Activated B cell treated with CpG ODN at 0.5 μM for 24 hours (primary cell): ENCODE measurements at regions of chr6 and their contacts with region 1.

Region 1: DNA sequence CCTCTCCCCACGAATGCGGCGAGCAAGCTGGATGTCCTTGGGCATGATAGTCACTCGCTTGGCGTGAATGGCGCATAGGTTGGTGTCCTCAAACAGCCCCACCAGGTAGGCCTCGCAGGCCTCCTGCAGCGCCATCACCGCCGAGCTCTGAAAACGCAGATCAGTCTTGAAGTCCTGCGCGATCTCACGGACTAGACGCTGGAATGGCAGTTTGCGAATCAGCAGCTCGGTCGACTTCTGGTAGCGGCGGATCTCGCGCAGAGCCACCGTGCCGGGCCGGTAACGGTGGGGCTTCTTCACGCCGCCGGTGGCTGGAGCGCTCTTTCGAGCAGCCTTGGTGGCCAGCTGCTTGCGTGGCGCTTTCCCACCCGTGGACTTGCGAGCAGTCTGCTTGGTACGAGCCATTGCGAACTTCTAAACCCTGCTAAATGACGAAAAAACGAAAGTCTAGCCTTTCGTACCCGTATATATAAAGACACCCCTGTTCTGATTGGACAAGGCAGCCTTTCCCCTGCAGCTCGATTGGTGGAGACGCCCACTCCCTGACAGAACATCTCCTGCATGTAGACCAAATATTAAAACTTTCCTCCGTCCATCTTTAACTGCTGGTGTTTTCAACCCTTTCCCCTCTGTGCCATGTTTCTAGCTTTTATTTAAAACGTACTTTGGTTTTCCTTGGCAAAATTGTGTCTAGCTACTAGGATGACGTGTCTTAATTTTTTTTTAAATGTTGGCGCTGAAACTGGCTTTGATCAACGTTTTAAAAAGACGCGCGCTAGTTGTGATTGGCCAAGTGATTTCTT is 109.8 kb downstream of the HFE start:
- DNase-seq: peak; percentile 63
- ATAC-seq: peak; percentile 53
- H3K4me3 Mint-ChIP-seq: peak overlapping the region; percentile 93
- H3K27ac Mint-ChIP-seq: peak overlapping the region; percentile 96
- H3K4me1 Mint-ChIP-seq: peaks cover 52% of the 10 kb centered on the region
- H3K27me3 Mint-ChIP-seq: no peaks in the 10 kb centered on the region
- CTCF ChIP-seq: no peak

Region 2: DNA sequence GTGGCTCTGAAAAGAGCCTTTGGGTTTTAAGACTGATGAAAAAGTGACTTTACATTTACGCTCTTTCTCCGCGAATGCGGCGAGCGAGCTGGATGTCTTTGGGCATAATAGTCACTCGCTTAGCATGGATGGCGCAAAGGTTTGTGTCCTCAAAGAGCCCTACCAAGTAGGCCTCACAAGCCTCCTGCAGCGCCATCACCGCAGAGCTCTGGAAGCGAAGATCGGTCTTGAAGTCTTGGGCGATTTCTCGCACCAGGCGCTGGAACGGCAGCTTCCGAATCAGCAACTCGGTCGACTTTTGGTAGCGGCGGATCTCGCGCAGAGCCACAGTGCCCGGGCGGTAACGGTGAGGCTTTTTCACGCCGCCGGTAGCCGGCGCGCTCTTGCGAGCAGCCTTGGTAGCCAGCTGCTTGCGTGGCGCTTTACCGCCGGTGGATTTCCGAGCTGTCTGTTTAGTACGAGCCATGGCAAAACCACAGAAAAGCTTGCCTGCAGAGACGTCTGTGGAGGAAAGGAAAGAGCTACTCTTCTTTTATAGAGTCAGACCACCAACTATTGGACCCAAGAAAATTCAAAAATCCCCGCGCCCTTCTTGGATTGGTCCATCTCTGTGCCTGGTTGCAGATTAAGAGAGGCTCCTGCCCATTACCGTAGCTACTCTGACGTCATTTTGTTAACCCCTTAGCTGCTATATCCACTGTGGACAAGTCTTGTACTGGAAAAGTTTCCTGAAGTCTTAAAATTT is 165.3 kb before region 1 on chr6:
- CTCF ChIA-PET with region 1: no interaction called
- POLR2A ChIA-PET with region 1: interaction called, 71 read pairs
- intact Hi-C with region 1: loop called (anchors 1 kb)
- DNase-seq: peak; percentile 55
- ATAC-seq: peak; percentile 62
- H3K4me3 Mint-ChIP-seq: peak overlapping the region; percentile 93
- H3K27ac Mint-ChIP-seq: peak overlapping the region; percentile 98
- H3K4me1 Mint-ChIP-seq: peaks cover 40% of the 10 kb centered on the region
- H3K27me3 Mint-ChIP-seq: peaks cover 2% of the 10 kb centered on the region
- CTCF ChIP-seq: no peak

Region 3: GRCh38 chr6:26103770-26104456 is 93.1 kb before region 1 on chr6:
- CTCF ChIA-PET with region 1: no interaction called
- POLR2A ChIA-PET with region 1: interaction called, 40 read pairs
- intact Hi-C with region 1: loop called (anchors 1 kb)
- DNase-seq: peak; percentile 83
- ATAC-seq: peak; percentile 85
- H3K4me3 Mint-ChIP-seq: peak overlapping the region; percentile 85
- H3K27ac Mint-ChIP-seq: peak overlapping the region; percentile 98
- H3K4me1 Mint-ChIP-seq: peaks cover 12% of the 10 kb centered on the region
- H3K27me3 Mint-ChIP-seq: peaks cover 3% of the 10 kb centered on the region
- CTCF ChIP-seq: no peak

Region 4: GRCh38 chr6:26234421-26235296 is 37.6 kb after region 1 on chr6:
- CTCF ChIA-PET with region 1: interaction called, 5 read pairs
- POLR2A ChIA-PET with region 1: interaction called, 340 read pairs
- intact Hi-C with region 1: loop called (anchors 1 kb)
- DNase-seq: peak; percentile 49
- ATAC-seq: peak; percentile 77
- H3K4me3 Mint-ChIP-seq: peak overlapping the region; percentile 89
- H3K27ac Mint-ChIP-seq: peak overlapping the region; percentile 97
- H3K4me1 Mint-ChIP-seq: peaks cover 26% of the 10 kb centered on the region
- H3K27me3 Mint-ChIP-seq: no peaks in the 10 kb centered on the region
- CTCF ChIP-seq: no peak

Region 5: DNA sequence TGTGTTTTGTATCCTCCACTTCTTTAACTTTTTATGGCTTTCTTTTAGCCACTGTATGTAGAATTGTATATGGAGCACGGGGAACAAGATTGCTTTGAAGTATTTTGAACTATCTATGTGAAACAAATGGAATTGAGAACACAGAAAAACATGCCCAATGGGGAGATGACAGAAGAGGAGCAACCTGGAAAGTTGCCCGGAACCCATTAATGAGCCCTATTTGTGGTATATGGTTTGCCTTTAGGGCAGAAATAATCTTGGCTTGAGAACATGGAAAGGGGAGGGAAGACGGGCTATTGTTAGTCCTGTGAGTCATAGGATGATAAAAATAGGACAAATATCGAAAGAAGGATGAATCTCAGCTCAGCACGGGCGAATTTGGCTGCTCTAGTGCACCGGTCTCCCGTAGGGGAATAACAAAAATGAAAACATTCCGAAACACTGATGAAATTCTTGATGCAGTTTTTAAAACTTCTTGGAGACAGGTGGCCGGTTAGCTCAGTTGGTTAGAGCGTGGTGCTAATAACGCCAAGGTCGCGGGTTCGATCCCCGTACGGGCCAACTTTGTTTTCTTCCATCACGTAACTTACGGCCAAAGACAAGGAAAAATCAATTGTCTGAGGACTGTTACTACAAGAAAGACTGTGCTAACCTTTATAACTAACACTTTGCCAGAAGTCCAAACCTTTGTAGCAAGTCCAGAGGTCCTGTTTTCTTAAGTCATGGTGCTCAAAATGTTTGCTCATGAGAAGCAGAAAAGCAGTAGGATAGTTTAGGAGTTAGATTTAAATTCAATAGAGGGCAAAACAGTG is 356.8 kb after region 1 on chr6:
- CTCF ChIA-PET with region 1: no interaction called
- POLR2A ChIA-PET with region 1: interaction called, 11 read pairs
- intact Hi-C with region 1: no loop called
- DNase-seq: peak; percentile 67
- ATAC-seq: peak; percentile 46
- H3K4me3 Mint-ChIP-seq: no peak overlapping the region
- H3K27ac Mint-ChIP-seq: no peak overlapping the region
- H3K4me1 Mint-ChIP-seq: peaks cover 28% of the 10 kb centered on the region
- H3K27me3 Mint-ChIP-seq: no peaks in the 10 kb centered on the region
- CTCF ChIP-seq: no peak

Region 6: DNA sequence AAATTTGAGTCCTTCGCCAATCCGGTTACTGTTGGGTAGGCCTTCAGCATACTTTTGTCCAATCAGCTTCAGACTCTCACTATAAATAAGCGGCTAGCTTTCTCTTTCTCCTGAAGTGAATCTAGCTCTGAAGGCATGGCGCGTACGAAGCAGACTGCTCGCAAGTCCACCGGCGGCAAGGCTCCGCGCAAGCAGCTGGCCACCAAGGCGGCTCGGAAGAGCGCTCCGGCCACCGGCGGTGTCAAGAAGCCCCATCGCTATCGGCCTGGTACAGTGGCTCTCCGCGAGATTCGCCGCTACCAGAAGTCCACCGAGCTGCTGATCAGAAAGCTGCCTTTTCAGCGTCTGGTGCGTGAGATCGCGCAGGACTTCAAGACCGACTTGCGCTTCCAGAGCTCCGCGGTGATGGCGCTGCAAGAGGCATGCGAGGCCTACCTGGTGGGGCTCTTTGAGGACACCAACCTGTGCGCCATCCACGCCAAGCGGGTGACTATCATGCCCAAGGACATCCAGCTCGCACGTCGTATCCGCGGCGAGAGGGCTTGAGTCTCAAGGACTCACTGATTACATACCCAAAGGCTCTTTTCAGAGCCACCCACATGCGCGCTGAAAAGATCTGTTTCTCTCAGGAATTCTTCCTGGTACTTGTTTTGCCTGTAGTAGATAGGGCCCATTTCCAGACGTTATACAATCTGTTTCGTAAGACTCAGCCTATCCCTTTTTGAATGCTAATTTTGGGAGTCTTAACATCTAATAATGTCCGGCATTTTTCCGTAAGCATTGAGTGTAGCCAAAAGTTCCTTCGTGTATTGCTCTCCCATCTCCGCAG is 1613.1 kb after region 1 on chr6:
- CTCF ChIA-PET with region 1: no interaction called
- POLR2A ChIA-PET with region 1: interaction called, 26 read pairs
- intact Hi-C with region 1: no loop called
- DNase-seq: peak; percentile 68
- ATAC-seq: peak; percentile 59
- H3K4me3 Mint-ChIP-seq: peak overlapping the region; percentile 93
- H3K27ac Mint-ChIP-seq: peak overlapping the region; percentile 97
- H3K4me1 Mint-ChIP-seq: peaks cover 59% of the 10 kb centered on the region
- H3K27me3 Mint-ChIP-seq: no peaks in the 10 kb centered on the region
- CTCF ChIP-seq: no peak

Region 7: GRCh38 chr6:28080631-28081485 is 1883.8 kb after region 1 on chr6:
- CTCF ChIA-PET with region 1: no interaction called
- POLR2A ChIA-PET with region 1: interaction called, 4 read pairs
- intact Hi-C with region 1: loop called (anchors 10 kb)
- DNase-seq: peak; percentile 89
- ATAC-seq: peak; percentile 68
- H3K4me3 Mint-ChIP-seq: peak overlapping the region; percentile 98
- H3K27ac Mint-ChIP-seq: peak overlapping the region; percentile 97
- H3K4me1 Mint-ChIP-seq: peaks cover 52% of the 10 kb centered on the region
- H3K27me3 Mint-ChIP-seq: no peaks in the 10 kb centered on the region
- CTCF ChIP-seq: no peak